Naive thymus-derived CD4-positive, alpha-beta T cell (primary cell): ENCODE measurements at regions of chr1 and their contacts with region 1.

Region 1: DNA sequence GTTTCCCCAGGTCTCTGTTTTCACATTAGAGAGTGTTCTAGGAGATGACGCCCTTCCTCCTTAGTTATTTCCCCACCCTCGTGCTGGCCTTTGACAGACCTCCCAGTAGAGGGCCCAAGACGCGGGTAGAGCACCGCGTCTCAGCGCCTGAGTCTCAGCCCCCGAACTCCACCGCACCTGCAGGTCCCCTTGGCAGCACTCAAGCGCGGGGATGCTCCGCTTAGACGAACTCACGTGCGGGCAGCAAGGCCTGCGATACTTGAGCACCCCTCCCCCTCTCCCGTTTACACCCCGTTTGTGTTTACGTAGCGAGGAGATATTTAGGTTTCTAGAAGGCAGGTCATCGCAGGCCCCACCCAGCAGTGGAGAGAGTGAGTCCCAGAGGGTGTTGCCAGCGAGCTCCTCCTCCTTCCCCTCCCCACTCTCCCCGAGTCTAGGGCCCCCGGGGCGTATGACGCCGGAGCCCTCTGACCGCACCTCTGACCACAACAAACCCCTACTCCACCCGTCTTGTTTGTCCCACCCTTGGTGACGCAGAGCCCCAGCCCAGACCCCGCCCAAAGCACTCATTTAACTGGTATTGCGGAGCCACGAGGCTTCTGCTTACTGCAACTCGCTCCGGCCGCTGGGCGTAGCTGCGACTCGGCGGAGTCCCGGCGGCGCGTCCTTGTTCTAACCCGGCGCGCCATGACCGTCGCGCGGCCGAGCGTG is at the start of gene CD55:
- DNase-seq: peak; percentile 92 to 100 (median 100)
- ATAC-seq: peak; percentile 95
- H3K4me3 ChIP-seq: peak within 1 kb of the TSS; percentile 88
- H3K4me3 Mint-ChIP-seq: peak within 1 kb of the TSS; percentile 90 to 99 (median 96)
- H3K27ac ChIP-seq: peak within 1 kb of the TSS; percentile 99
- H3K27ac Mint-ChIP-seq: peak within 1 kb of the TSS; percentile 99 to 100 (median 100)
- H3K4me1 ChIP-seq: peaks cover 6 to 13% of the 10 kb centered on the region in 2 donors
- H3K4me1 Mint-ChIP-seq: peaks cover 25 to 64% (median 50%) of the 10 kb centered on the region in 7 donors
- H3K27me3 ChIP-seq: no peaks in the 10 kb centered on the region
- H3K27me3 Mint-ChIP-seq: peaks cover 0 to 3% (median 0%) of the 10 kb centered on the region in 5 donors
- total RNA-seq, gene CD55: 122 to 264 (median 134) TPM

Region 2: GRCh38 chr1:206635080-206635977 is 685.9 kb before region 1 on chr1 and contains the start of gene DYRK3:
- CTCF ChIA-PET with region 1: no interaction called
- POLR2A ChIA-PET with region 1: no interaction called
- intact Hi-C with region 1: loop called in 1 of 2 experiments (anchors 1 kb)
- DNase-seq: peak; percentile 71 to 98 (median 80)
- ATAC-seq: peak; percentile 97
- H3K4me3 ChIP-seq: peak within 1 kb of the TSS; percentile 67
- H3K4me3 Mint-ChIP-seq: peak within 1 kb of the TSS; percentile 85 to 96 (median 90)
- H3K27ac ChIP-seq: peak within 1 kb of the TSS; percentile 57
- H3K27ac Mint-ChIP-seq: peak within 1 kb of the TSS; percentile 64 to 93 (median 85)
- H3K4me1 ChIP-seq: peaks cover 8 to 16% of the 10 kb centered on the region in 2 donors
- H3K4me1 Mint-ChIP-seq: peaks cover 14 to 29% (median 18%) of the 10 kb centered on the region in 7 donors
- H3K27me3 ChIP-seq: no peaks in the 10 kb centered on the region
- H3K27me3 Mint-ChIP-seq: peaks cover 7 to 13% (median 9%) of the 10 kb centered on the region in 5 donors
- total RNA-seq, gene DYRK3: 0.22 to 8.2 (median 0.69) TPM

Region 3: DNA sequence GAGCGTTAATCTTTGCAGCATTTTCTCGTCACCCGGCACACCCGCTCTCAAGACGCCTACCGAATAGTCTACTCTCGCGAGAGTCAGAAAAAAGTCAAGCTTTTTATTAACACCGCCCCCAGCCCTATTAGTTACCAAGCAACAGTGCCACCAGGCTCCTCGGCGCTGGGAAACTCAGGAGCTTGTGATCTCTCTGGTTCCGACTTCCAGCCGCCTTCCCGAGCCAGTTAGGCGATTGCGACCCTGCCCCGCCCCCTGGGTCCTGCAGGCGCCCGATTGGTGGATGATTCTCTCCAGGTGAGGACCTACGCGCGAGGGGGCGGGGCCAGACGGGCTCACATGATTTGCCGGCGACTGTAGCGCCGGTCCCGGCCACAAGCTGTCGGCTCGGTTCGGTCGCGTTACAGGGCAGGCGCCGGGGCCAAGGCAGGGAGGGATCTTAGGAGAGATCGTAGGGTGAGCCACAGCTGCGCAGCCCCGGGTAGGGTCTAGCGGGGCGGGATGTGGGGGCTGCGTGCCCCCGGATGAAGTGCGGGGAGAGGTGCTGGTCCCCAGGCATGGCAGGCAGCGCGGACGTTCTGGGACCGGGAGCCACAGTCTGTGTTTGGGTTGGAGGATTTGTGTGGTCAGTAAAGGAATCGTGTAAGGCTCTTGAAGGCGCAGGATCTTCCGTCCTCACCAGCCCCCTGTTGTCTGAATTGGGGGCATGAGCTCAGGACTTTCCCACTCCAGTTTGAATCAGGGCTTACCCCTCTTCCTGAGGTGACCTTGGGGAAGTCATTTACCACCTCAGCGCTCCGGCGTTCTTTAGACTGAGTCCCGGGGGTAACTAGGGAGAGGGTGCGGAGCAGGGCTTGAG is 268.1 kb before region 1 on chr1 and contains the start of gene PFKFB2:
- CTCF ChIA-PET with region 1: no interaction called
- POLR2A ChIA-PET with region 1: interaction called, 3 read pairs
- intact Hi-C with region 1: loop called (anchors 1 kb)
- DNase-seq: peak; percentile 93 to 97 (median 96)
- ATAC-seq: peak; percentile 93
- H3K4me3 ChIP-seq: peak within 1 kb of the TSS; percentile 85
- H3K4me3 Mint-ChIP-seq: peak within 1 kb of the TSS; percentile 95 to 100 (median 98)
- H3K27ac ChIP-seq: peak within 1 kb of the TSS; percentile 72
- H3K27ac Mint-ChIP-seq: peak within 1 kb of the TSS; percentile 86 to 100 (median 97)
- H3K4me1 ChIP-seq: peaks cover 11 to 16% of the 10 kb centered on the region in 2 donors
- H3K4me1 Mint-ChIP-seq: peaks cover 25 to 54% (median 49%) of the 10 kb centered on the region in 7 donors
- H3K27me3 ChIP-seq: no peaks in the 10 kb centered on the region
- H3K27me3 Mint-ChIP-seq: peaks cover 0 to 12% (median 0%) of the 10 kb centered on the region in 5 donors
- total RNA-seq, gene PFKFB2: 2.3 to 4.6 (median 3.8) TPM

Region 4: GRCh38 chr1:207239874-207240273 is 81.4 kb before region 1 on chr1:
- CTCF ChIA-PET with region 1: no interaction called
- POLR2A ChIA-PET with region 1: interaction called, 6 read pairs
- intact Hi-C with region 1: loop called in 1 of 2 experiments (anchors 1 kb)
- DNase-seq: no peak
- ATAC-seq: no peak
- H3K4me3 ChIP-seq: no peak overlapping the region
- H3K4me3 Mint-ChIP-seq: no peak overlapping the region
- H3K27ac ChIP-seq: no peak overlapping the region
- H3K27ac Mint-ChIP-seq: no peak overlapping the region
- H3K4me1 ChIP-seq: no peaks in the 10 kb centered on the region
- H3K4me1 Mint-ChIP-seq: peaks cover 0 to 3% (median 0%) of the 10 kb centered on the region in 7 donors
- H3K27me3 ChIP-seq: no peaks in the 10 kb centered on the region
- H3K27me3 Mint-ChIP-seq: peaks cover 0 to 23% (median 0%) of the 10 kb centered on the region in 5 donors

Region 5: GRCh38 chr1:207336559-207337467 is 15.6 kb after region 1 on chr1:
- CTCF ChIA-PET with region 1: interaction called, 12 read pairs
- POLR2A ChIA-PET with region 1: interaction called, 20 read pairs
- intact Hi-C with region 1: loop called (anchors 1 kb)
- DNase-seq: peak in 8 of 9 donors; percentile 42 to 67 (median 55)
- ATAC-seq: peak; percentile 56
- H3K4me3 ChIP-seq: peak overlapping the region; percentile 31
- H3K4me3 Mint-ChIP-seq: peak overlapping the region; percentile 35 to 78 (median 71)
- H3K27ac ChIP-seq: peak overlapping the region; percentile 65
- H3K27ac Mint-ChIP-seq: peak overlapping the region; percentile 70 to 94 (median 88)
- H3K4me1 ChIP-seq: peaks cover 24 to 38% of the 10 kb centered on the region in 2 donors
- H3K4me1 Mint-ChIP-seq: peaks cover 46 to 86% (median 74%) of the 10 kb centered on the region in 7 donors
- H3K27me3 ChIP-seq: no peaks in the 10 kb centered on the region
- H3K27me3 Mint-ChIP-seq: no peaks in the 10 kb centered on the region

Region 6: GRCh38 chr1:207454046-207454964 is 133.1 kb after region 1 on chr1 and contains the start of gene CR2:
- CTCF ChIA-PET with region 1: no interaction called
- POLR2A ChIA-PET with region 1: interaction called, 3 read pairs
- intact Hi-C with region 1: loop called in 1 of 2 experiments (anchors 5 kb)
- DNase-seq: peak; percentile 15 to 57 (median 41)
- ATAC-seq: peak; percentile 73
- H3K4me3 ChIP-seq: peak within 1 kb of the TSS; percentile 53
- H3K4me3 Mint-ChIP-seq: peak within 1 kb of the TSS in 8 of 10 donors; percentile 50 to 90 (median 82)
- H3K27ac ChIP-seq: peak within 1 kb of the TSS; percentile 48
- H3K27ac Mint-ChIP-seq: peak within 1 kb of the TSS in 6 of 9 donors; percentile 22 to 81 (median 67)
- H3K4me1 ChIP-seq: peaks cover 9 to 35% of the 10 kb centered on the region in 2 donors
- H3K4me1 Mint-ChIP-seq: peaks cover 5 to 16% (median 6%) of the 10 kb centered on the region in 7 donors
- H3K27me3 ChIP-seq: peaks cover 0 to 7% of the 10 kb centered on the region in 2 donors
- H3K27me3 Mint-ChIP-seq: peaks cover 0 to 37% (median 30%) of the 10 kb centered on the region in 5 donors
- total RNA-seq, gene CR2: 2.6 to 13.1 (median 3.4) TPM in 4 of 5 experiments, not detected in the other